Breast epithelium (tissue), 4 donors: ENCODE measurements at regions of chr9 and their contacts with region 1.

Region 1: DNA sequence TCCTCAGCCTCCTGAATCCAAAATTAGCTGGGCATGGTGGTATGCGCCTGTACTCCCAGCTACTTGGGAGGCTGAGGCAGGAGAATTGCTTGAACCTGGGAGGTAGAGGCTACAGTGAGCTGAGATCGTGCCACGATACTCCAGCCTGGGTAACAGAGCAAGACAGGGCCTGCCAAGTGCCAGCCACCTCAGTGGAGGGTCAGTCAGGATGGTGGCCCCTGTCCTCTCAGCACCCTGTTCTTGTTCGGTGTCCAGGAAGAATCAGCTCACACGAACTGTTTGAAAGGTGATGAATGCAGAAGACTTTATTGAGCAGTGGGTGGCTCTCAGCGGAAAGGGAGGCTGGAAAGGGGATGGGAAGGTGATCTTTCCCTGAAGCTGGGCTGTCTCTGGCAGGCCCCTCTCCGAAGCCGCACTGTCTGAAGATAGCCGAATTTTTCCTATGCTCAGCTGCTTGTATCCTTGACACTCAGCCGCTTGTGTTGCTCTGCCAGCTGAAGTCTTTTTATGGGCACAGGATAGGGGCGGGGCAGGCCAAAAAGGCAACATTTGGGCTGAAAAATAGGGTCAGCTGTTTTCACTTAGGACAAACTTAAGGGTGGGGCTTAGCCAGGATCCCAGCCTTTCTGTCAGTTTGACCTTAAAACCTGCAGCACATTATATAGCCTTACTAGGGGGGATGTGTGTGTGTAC is 50.9 kb downstream of the UBE2R2 start:
- DNase-seq: no peak
- H3K4me3 ChIP-seq: peak overlapping the region in 2 of 3 donors; percentile 5 to 16
- H3K27ac ChIP-seq: peak overlapping the region; percentile 33 to 67
- H3K4me1 ChIP-seq: peaks cover 0 to 11% of the 10 kb centered on the region in 2 donors
- H3K27me3 ChIP-seq: no peaks in the 10 kb centered on the region
- CTCF ChIP-seq: no peak
- POLR2A ChIP-seq: no peak

Region 2: GRCh38 chr9:33823801-33824200 is 44.1 kb before region 1 on chr9:
- intact Hi-C with region 1: loop called (anchors 2 kb)
- DNase-seq: no peak
- H3K4me3 ChIP-seq: no peak overlapping the region
- H3K27ac ChIP-seq: no peak overlapping the region
- H3K4me1 ChIP-seq: peaks cover 0 to 5% of the 10 kb centered on the region in 2 donors
- H3K27me3 ChIP-seq: no peaks in the 10 kb centered on the region
- CTCF ChIP-seq: no peak
- POLR2A ChIP-seq: no peak